Activated B cell treated with CpG ODN at 0.5 μM for 24 hours (primary cell): ENCODE measurements at regions of chr14 and their contacts with region 1.

Region 1: GRCh38 chr14:81170104-81170828 is 50.5 kb downstream of the GTF2A1 start:
- DNase-seq: peak; percentile 79
- ATAC-seq: peak; percentile 98
- H3K4me3 Mint-ChIP-seq: peak overlapping the region; percentile 90
- H3K27ac Mint-ChIP-seq: peak overlapping the region; percentile 97
- H3K4me1 Mint-ChIP-seq: peaks cover 42% of the 10 kb centered on the region
- H3K27me3 Mint-ChIP-seq: no peaks in the 10 kb centered on the region
- CTCF ChIP-seq: peak; percentile 49

Region 2: DNA sequence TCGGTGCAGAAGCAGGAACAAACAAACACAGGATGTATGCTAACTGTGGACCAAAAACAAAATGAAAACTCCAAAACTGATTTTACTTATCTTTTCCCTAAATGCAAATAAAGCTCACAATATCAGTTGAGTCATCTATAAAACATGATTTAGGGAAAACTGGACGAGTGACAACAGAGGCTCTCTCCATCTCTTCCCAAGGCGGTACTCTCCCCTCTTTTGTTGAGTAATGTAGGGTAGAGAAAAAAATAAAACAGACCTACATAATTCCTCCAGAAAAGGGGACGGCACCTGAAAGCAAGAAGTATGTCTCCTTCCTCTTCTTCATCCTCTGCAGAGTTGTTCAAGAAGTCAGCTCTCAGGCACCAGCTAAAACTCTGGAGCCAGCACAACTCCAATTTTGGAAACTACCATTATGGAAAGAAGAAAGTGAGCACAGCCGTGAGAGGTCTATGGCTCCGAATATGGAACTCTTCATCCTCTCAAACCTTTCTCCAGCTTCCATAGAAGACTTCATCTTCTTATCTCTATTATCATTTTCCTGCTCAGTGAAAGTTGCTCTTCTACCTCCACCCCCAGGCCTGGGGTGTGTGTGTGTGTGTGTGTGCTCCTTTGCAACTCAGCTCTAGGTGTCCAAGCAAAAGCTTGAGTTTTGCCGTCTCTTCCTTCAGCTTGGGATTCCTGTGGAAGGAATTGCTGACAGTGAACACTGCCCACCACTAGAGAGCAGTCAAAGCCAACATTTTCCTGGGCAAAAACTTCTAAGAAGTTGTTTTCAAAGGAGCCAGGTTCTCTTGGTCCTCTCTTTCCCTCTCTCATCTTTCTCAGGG is 1114.4 kb before region 1 on chr14:
- CTCF ChIA-PET with region 1: no interaction called
- POLR2A ChIA-PET with region 1: no interaction called
- intact Hi-C with region 1: loop called (anchors 5 kb)
- DNase-seq: no peak
- ATAC-seq: no peak
- H3K4me3 Mint-ChIP-seq: no peak overlapping the region
- H3K27ac Mint-ChIP-seq: no peak overlapping the region
- H3K4me1 Mint-ChIP-seq: no peaks in the 10 kb centered on the region
- H3K27me3 Mint-ChIP-seq: no peaks in the 10 kb centered on the region
- CTCF ChIP-seq: no peak

Region 3: GRCh38 chr14:80996049-80996901 is 174.0 kb before region 1 on chr14:
- CTCF ChIA-PET with region 1: interaction called, 42 read pairs
- POLR2A ChIA-PET with region 1: interaction called, 5 read pairs
- intact Hi-C with region 1: loop called (anchors 1 kb)
- DNase-seq: no peak
- ATAC-seq: peak; percentile 77
- H3K4me3 Mint-ChIP-seq: no peak overlapping the region
- H3K27ac Mint-ChIP-seq: no peak overlapping the region
- H3K4me1 Mint-ChIP-seq: peaks cover 4% of the 10 kb centered on the region
- H3K27me3 Mint-ChIP-seq: peaks cover 7% of the 10 kb centered on the region
- CTCF ChIP-seq: no peak

Region 4: DNA sequence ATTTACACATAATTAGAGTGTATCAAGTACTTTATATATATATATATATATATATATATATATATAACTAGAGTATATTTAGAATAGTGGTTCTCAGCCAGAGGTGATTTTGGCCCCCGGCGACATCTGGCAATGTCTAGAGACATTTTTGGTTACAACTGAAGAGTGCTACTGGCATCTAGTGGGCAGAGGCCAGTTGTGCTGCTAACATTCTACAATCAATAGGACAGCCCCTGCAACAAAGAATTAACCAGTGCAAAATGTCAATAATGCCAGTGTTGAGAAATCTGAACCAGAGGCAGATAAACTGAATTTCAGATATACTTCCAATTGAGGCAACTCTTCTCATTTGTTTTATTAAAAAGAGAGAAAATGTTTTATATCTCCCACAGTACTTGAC is 41.6 kb after region 1 on chr14:
- CTCF ChIA-PET with region 1: interaction called, 7 read pairs
- POLR2A ChIA-PET with region 1: no interaction called
- intact Hi-C with region 1: loop called (anchors 2 kb)
- DNase-seq: no peak
- ATAC-seq: peak; percentile 80
- H3K4me3 Mint-ChIP-seq: no peak overlapping the region
- H3K27ac Mint-ChIP-seq: no peak overlapping the region
- H3K4me1 Mint-ChIP-seq: peaks cover 53% of the 10 kb centered on the region
- H3K27me3 Mint-ChIP-seq: no peaks in the 10 kb centered on the region
- CTCF ChIP-seq: no peak

Region 5: DNA sequence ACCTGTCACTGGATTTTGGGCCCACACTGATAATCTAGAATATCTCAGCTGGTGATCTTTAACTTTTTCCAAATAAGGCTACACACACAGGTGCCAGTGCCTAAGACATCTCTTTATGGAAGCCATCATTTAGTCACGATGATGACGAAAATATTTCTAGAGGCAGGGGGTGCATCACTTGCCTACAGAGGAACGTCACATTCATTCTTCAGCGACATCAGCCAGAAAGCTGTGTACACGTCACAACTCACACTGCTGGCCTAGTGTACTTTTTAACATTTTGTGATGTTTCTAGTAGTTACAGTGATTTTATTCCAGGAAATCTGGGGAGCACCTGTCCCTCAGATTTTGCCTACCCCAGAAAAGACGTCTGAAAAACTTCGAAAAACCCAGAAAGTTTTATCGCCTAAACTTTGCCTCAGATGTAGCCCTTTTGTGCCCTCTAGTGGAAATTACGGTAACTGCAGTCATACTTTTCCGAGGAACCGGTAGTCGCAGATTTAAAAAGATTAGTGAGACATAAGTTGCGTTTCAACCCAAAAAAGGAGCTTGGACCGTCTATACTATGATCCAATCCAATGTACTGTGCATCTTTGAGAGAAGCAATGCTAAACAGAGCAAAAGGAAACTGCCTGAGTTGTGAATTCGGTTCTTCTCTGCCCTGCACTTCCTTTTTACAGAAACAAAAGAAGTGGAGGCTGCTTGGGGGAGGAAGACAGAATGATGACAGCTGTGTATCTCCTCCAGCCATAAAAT is 294.2 kb after region 1 on chr14:
- CTCF ChIA-PET with region 1: no interaction called
- POLR2A ChIA-PET with region 1: no interaction called
- intact Hi-C with region 1: loop called (anchors 2 kb)
- DNase-seq: no peak
- ATAC-seq: peak; percentile 76
- H3K4me3 Mint-ChIP-seq: peak overlapping the region; percentile 81
- H3K27ac Mint-ChIP-seq: peak overlapping the region; percentile 76
- H3K4me1 Mint-ChIP-seq: peaks cover 6% of the 10 kb centered on the region
- H3K27me3 Mint-ChIP-seq: no peaks in the 10 kb centered on the region
- CTCF ChIP-seq: peak; percentile 77

Region 6: GRCh38 chr14:81533536-81534343 is 363.5 kb after region 1 on chr14 and contains the start of gene SEL1L:
- CTCF ChIA-PET with region 1: interaction called, 3 read pairs
- POLR2A ChIA-PET with region 1: interaction called, 5 read pairs
- intact Hi-C with region 1: loop called (anchors 2 kb)
- DNase-seq: peak; percentile 99
- ATAC-seq: peak; percentile 96
- H3K4me3 Mint-ChIP-seq: peak within 1 kb of the TSS; percentile 96
- H3K27ac Mint-ChIP-seq: peak within 1 kb of the TSS; percentile 85
- H3K4me1 Mint-ChIP-seq: peaks cover 58% of the 10 kb centered on the region
- H3K27me3 Mint-ChIP-seq: no peaks in the 10 kb centered on the region
- CTCF ChIP-seq: no peak
- total RNA-seq, gene SEL1L: 52.9 and 55.4 TPM in 2 replicates